ENCODE measurements at regions of chr10 and their contacts with region 1.

Region 1: DNA sequence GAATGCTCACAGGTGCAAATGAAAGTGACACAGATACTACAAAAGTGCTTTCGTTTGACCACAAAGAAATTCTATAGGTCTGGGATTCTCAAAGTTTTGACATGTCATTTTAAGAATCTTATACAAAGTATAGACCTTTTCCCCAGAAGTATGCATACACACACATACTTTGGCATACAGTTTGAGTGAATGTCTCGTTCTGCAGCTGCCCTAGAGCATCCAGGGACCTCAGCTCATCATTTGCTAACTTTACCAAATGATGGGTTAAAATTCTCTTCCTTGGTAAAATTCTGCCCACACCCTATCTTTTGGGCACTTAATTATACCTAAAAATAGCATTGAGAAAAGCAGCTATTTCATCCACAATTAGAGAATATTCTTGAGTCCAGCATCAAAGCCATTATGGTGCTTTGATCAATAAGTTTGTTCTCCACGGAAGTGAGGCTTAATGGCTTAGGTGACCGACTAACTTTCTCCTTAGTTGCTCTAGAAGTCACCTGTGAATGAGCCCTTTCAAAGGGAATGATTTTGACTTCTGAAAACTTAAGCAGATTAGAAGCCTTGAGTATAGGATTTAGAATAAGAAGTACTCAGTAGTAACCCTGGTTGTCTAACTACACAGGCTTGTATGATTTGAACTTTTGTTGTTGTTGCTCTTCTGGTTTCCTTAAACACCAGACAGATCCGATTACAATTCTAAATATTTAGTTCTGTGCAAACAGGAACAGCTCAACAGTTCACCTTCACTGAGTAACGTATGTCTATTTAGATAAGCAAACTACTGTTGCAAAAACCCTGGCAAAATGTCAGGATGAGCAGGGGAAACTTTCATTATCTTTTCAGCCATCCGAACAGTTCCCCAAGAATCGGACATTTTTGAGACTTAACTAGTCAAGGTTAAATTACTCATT is 70.6 kb downstream of the CNNM2 start:
- DNase-seq: peak; percentile 97
- ATAC-seq: peak; percentile 97
- H3K4me3 ChIP-seq: peak overlapping the region; percentile 2 to 55 (median 38); a peak in 3 of 6 replicates
- H3K27ac ChIP-seq: peak overlapping the region; percentile 92
- H3K4me1 ChIP-seq: peaks cover 92% of the 10 kb centered on the region
- H3K27me3 ChIP-seq: no peaks in the 10 kb centered on the region
- CTCF ChIP-seq: no peak
- EP300 ChIP-seq: peak in 1 of 2 experiments; percentile 91; a peak in 2 of 4 replicates
- POLR2A ChIP-seq: no peak
- RAD21 ChIP-seq: no peak

Region 2: GRCh38 chr10:103053659-103054581 is 65.3 kb after region 1 on chr10:
- CTCF ChIA-PET with region 1: no interaction called
- POLR2A ChIA-PET with region 1: no interaction called
- in situ Hi-C with region 1: no loop called
- intact Hi-C with region 1: loop called (anchors 5 kb)
- DNase-seq: peak; percentile 96
- ATAC-seq: peak; percentile 99
- H3K4me3 ChIP-seq: peak overlapping the region in 2 of 3 experiments; percentile 41 to 54; a peak in 4 of 6 replicates
- H3K27ac ChIP-seq: peak overlapping the region; percentile 50
- H3K4me1 ChIP-seq: peaks cover 21% of the 10 kb centered on the region
- H3K27me3 ChIP-seq: no peaks in the 10 kb centered on the region
- CTCF ChIP-seq: peak; percentile 94
- EP300 ChIP-seq: peak; percentile 63 to 87; a peak in 3 of 4 replicates
- POLR2A ChIP-seq: no peak
- RAD21 ChIP-seq: peak; percentile 93

Measured in HepG2 (cell line).